Posterior vena cava (tissue), 2 donors: ENCODE measurements at regions of chr1 and their contacts with region 1.

Region 1: GRCh38 chr1:244652699-244653466 is at the start of gene DESI2:
- DNase-seq: peak; percentile 99
- total RNA-seq, gene DESI2: 28.4 to 31.6 TPM

Region 2: GRCh38 chr1:242723044-242723716 is 1929.7 kb before region 1 on chr1:
- intact Hi-C with region 1: no loop called
- DNase-seq: no peak

Region 3: DNA sequence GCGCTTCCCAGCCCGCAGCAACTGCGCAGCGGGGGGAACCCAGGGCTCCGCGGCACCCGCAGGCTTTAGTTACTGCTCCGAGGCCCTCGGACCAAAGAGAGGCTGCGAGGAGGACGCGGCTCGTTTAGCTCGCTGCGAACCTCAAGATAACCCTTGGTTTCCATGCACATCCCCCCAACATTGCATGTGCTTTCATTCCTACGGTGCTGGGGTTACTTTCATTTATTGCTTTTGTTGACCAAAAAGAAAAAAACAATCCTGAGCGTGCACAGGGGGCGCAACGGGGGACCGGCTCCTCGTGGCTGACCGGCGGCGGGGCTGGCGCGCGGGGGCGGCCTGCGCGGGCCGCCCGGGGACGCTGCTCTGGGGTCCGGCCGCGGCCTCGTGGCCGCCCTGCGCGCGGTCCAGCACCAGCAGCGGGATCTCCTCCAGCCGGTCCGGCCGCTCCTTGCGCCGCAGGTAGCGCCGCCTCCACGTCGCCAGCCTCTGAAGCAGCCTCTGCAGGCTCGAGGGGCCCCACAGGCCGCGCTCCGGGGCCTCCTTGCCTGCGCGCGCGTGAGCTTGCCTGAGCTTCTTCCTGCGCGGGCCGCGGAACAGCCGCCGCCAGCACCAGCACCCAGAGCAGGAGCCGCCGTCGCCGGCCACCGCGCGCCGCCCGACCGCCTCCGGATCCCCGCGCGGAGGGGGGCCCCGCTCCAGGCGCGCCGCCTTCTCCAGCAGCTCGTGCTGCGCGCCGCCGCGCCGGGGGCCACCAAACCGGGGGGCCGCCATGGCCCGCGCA is 77.5 kb after region 1 on chr1:
- intact Hi-C with region 1: loop called in 1 of 2 experiments (anchors 1 kb)
- DNase-seq: no peak